ENCODE measurements at regions of chr2 and their contacts with region 1.

Region 1: DNA sequence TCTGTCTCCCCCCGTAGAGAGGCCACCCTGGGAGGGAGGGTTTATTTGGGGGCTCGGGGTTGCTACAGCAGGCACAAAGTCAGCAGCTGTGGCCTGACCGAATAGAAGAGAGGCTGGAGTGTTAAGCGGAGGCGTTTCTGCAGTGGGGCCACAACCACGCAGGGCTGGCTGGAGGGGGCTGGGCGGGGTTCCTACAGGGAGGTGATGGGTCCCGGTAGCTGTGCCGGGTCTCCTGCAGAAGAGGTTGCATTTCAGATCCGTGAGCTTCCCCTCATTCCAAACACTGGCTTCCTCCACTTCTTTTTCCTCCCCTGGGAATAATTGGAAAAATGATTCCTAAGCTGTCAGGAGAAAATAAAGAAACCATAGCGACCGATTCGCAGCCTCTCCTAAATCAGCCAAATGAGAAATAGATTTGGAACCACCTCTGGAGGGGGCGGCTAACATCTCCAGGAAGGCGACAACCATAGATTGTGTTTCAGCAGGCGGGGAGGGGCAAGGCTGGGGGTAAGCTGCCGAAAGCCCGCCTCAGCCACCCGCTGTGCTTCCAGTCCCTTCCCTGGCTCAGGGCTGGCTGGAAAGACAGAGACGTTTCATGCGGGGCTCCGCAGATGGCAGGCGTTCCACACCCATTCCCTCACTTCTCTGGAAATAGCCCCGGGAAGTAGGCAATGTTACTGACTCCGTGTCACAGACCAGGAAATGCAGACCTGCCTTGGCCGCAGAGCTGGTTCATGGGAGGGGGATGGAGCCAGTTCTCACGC is 85.6 kb upstream of the TAF1B start:
- DNase-seq: peak; percentile 73 to 87
- ATAC-seq: peak; percentile 82 to 89 (median 84)
- H3K4me3 ChIP-seq: peak overlapping the region; percentile 57
- H3K27ac ChIP-seq: peak overlapping the region; percentile 95
- H3K4me1 ChIP-seq: peaks cover 46% of the 10 kb centered on the region
- H3K27me3 ChIP-seq: no peaks in the 10 kb centered on the region
- CTCF ChIP-seq: no peak

Region 2: DNA sequence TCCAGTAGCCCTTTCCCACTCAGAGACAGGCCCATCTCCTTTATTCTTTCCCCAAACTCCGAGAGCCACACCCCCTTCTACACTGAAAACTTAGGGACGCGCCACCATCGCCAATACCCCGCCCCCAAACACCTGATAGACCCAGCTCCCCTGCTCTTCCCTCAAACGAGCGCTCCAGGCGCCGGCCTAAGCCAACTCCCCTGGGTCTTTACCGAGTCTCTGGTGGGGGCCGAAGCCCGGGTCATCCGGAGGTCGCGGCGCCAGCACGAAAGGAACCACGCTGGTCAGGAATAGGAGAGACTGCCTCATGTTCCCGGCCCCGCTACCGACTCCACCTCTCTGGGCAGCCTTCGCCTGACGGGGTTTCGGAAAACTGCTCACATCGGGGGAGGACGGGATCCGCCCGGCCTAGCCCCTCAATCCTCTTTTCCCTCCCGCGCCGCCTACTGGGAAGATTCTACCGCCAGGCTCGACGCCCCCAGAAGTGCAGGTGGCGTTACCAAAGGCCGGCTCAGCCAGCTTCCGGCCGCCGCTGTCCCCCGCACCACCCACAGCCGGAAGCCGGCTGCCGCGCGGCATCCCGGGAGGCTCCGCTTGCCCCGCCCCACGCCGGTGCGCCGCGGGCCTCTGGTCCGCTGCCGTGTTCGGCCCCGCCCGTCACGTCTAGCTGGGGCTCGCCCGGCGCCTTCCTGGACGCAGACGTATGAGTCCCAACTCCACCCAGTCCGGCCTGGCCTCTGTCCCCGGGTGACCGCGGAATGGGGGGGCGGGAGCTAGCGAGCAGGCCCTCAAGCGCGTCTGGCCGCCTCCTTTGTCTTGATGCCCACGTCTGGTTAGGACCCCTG is 202.2 kb before region 1 on chr2 and contains the start of gene ADAM17:
- intact Hi-C with region 1: loop called (anchors 5 to 10 kb)
- DNase-seq: peak; percentile 98
- ATAC-seq: peak; percentile 93 to 97 (median 94)
- H3K4me3 ChIP-seq: peak within 1 kb of the TSS; percentile 93
- H3K27ac ChIP-seq: peak within 1 kb of the TSS; percentile 96
- H3K4me1 ChIP-seq: peaks cover 47% of the 10 kb centered on the region
- H3K27me3 ChIP-seq: no peaks in the 10 kb centered on the region
- CTCF ChIP-seq: peak; percentile 25
- total RNA-seq, gene ADAM17: 12.9 to 36.3 (median 16.1) TPM

Region 3: DNA sequence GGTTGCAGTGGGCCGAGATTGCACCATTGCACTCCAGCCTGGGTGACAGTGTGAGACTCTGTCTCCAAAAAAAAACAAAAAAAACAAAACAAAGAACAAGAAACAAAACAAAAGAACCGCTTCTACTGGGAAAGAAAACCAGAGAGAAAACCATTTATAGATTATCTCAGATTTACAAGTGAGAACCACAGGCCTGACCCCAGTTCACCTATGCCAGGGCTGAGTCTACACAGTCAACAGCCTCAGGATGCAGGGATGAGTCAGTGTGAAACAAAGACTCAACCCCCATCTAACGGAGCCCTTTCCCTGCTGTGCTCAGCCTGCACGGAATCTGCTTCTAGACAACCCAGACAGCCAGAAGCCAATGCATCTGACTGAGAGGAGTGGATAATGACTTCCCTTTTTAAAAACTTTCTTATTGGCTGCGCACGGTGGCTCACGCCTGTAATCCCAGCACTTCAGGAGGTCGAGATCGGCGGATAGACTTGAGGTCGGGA is 101.4 kb before region 1 on chr2:
- intact Hi-C with region 1: no loop called
- DNase-seq: no peak
- ATAC-seq: no peak
- H3K4me3 ChIP-seq: no peak overlapping the region
- H3K27ac ChIP-seq: no peak overlapping the region
- H3K4me1 ChIP-seq: peaks cover 8% of the 10 kb centered on the region
- H3K27me3 ChIP-seq: no peaks in the 10 kb centered on the region
- CTCF ChIP-seq: no peak

Region 4: GRCh38 chr2:9693211-9693520 is 64.5 kb before region 1 on chr2:
- intact Hi-C with region 1: loop called in 1 of 2 experiments (anchors 2 kb)
- DNase-seq: peak; percentile 83 to 92
- ATAC-seq: peak; percentile 94 to 98 (median 96)
- H3K4me3 ChIP-seq: peak overlapping the region; percentile 54
- H3K27ac ChIP-seq: peak overlapping the region; percentile 96
- H3K4me1 ChIP-seq: peaks cover 19% of the 10 kb centered on the region
- H3K27me3 ChIP-seq: no peaks in the 10 kb centered on the region
- CTCF ChIP-seq: no peak

Region 5: DNA sequence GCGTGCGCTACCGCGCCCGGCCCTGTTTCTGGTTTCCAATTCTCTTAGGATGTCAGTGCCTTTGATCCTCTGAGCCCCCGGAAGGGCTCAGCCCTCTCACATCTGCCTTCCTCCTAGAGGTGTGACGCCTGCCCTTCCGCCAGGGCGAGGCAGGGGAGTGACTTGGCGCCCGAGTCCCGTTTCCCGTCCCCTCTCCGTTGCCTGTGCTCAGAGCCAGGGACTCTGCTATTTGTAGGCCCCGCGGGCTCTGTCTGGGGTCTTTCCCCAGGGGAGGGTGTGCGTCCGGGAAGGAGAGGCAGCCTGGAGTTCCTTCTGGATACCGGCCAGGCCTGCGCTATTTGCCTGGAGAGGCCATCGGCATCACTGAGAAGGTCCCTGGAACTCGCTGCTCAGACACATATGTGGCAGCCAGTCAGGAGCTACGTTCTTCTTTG is 18.1 kb before region 1 on chr2:
- intact Hi-C with region 1: loop called in 1 of 2 experiments (anchors 1 kb)
- DNase-seq: peak; percentile 79 to 90
- ATAC-seq: peak; percentile 59 to 79 (median 73)
- H3K4me3 ChIP-seq: peak overlapping the region; percentile 55
- H3K27ac ChIP-seq: peak overlapping the region; percentile 92
- H3K4me1 ChIP-seq: peaks cover 29% of the 10 kb centered on the region
- H3K27me3 ChIP-seq: no peaks in the 10 kb centered on the region
- CTCF ChIP-seq: no peak